Heart right ventricle (tissue), 16 donors: ENCODE measurements at regions of chr10 and their contacts with region 1.

Region 1: DNA sequence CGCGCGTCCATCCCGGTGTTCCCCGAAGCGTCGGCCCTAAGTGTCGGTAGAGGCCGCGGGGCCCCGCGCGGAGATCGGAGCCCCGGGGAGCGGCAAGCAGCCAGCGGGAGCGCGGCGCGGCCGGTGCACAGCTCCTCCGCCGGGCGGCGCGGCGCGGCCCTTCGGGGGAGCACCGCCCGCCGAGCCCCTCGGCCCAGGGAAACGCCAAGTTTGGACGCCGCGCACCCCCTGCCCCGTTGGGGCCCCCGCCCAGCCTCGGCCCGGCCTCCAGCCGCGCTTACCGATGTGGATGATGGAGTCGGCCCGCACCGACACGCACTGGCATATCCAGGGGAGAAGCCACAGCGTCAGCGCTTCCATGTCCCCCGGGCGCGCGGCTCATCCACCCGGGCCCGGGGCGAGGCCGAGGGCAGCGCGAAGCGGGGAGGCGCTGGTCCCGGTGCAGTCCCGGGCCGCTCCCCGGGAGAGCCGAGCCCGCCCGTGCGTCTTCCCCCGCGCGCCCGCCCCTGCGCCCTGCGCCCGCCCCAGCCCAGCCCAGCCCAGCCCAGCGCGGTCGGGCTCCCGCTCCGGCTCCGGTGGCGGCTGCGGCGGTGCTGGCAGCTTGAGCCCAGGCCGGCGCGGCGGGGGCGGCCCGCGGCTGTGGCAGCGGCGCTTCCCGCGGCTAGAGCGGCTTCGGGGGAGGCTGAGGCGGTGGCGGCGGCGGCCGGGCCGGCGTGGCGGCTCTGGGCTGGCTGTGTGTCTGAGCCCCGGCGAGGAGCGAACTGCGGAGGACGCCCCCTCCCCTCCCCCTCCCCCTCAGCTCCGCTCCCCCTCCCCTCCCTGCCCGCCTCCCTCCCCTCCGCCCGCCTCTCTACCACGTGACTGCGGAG is at the start of gene GRID1:
- DNase-seq: peak in 1 of 2 donors; percentile 42
- ATAC-seq: peak in 6 of 8 donors; percentile 30 to 64 (median 43)
- H3K4me3 ChIP-seq: peak within 1 kb of the TSS; percentile 23 to 65 (median 54)
- H3K27ac ChIP-seq: no peak within 1 kb of the TSS
- H3K4me1 ChIP-seq: peaks cover 0 to 43% (median 24%) of the 10 kb centered on the region in 9 donors
- H3K27me3 ChIP-seq: peaks cover 7 to 89% (median 72%) of the 10 kb centered on the region in 7 donors
- CTCF ChIP-seq: peak in 3 of 9 donors; percentile 3 to 33 (median 23)
- total RNA-seq, gene GRID1: 0.77 to 3.4 (median 1.9) TPM

Region 2: GRCh38 chr10:85548034-85548433 is 818.2 kb before region 1 on chr10:
- intact Hi-C with region 1: loop called in 3 of 10 experiments (anchors 10 kb)
- DNase-seq: peak in 1 of 2 donors; percentile 16
- ATAC-seq: peak in 1 of 8 donors; percentile 70
- H3K4me3 ChIP-seq: no peak overlapping the region
- H3K27ac ChIP-seq: no peak overlapping the region
- H3K4me1 ChIP-seq: no peaks in the 10 kb centered on the region
- H3K27me3 ChIP-seq: peaks cover 0 to 4% (median 0%) of the 10 kb centered on the region in 7 donors
- CTCF ChIP-seq: peak in 7 of 9 donors; percentile 5 to 59 (median 43)

Region 3: GRCh38 chr10:85791818-85792532 is 574.3 kb before region 1 on chr10:
- intact Hi-C with region 1: loop called in 6 of 10 experiments (anchors 5 to 10 kb)
- DNase-seq: no peak
- ATAC-seq: peak in 3 of 8 donors; percentile 16 to 62 (median 45)
- H3K4me3 ChIP-seq: no peak overlapping the region
- H3K27ac ChIP-seq: no peak overlapping the region
- H3K4me1 ChIP-seq: peaks cover 0 to 16% (median 5%) of the 10 kb centered on the region in 9 donors
- H3K27me3 ChIP-seq: no peaks in the 10 kb centered on the region
- CTCF ChIP-seq: peak in 6 of 9 donors; percentile 27 to 54 (median 40)

Region 4: DNA sequence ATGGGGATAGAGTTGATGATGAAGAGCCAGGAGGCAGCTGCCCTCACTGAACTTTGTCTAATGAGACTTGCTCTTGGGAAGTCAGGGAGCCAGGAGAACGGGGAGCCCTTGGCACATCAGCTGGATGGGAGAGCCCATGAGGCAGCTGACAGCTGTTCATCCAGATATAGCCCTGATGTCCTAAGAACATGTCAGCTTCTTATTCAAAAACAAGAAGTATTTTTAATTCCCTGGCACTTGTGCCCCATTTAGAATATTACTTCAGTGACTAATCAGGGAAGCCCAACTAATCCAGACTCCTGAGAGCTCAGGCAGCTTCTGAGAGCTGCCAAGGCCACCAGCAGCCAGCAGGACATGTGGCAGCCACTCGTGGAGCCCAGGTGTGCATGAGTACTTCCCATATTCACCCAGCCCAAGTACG is 363.1 kb before region 1 on chr10:
- intact Hi-C with region 1: loop called in 8 of 10 experiments (anchors 5 to 10 kb)
- DNase-seq: peak in 1 of 2 donors; percentile 31
- ATAC-seq: peak; percentile 38 to 98 (median 94)
- H3K4me3 ChIP-seq: no peak overlapping the region
- H3K27ac ChIP-seq: peak overlapping the region in 1 of 10 donors; percentile 18
- H3K4me1 ChIP-seq: peaks cover 0 to 9% (median 0%) of the 10 kb centered on the region in 9 donors
- H3K27me3 ChIP-seq: peaks cover 0 to 4% (median 0%) of the 10 kb centered on the region in 7 donors
- CTCF ChIP-seq: no peak

Region 5: GRCh38 chr10:86079088-86079487 is 287.2 kb before region 1 on chr10:
- intact Hi-C with region 1: no loop called
- DNase-seq: no peak
- ATAC-seq: peak in 5 of 8 donors; percentile 47 to 84 (median 62)
- H3K4me3 ChIP-seq: no peak overlapping the region
- H3K27ac ChIP-seq: no peak overlapping the region
- H3K4me1 ChIP-seq: peaks cover 0 to 11% (median 0%) of the 10 kb centered on the region in 9 donors
- H3K27me3 ChIP-seq: peaks cover 0 to 9% (median 0%) of the 10 kb centered on the region in 7 donors
- CTCF ChIP-seq: no peak

Region 6: DNA sequence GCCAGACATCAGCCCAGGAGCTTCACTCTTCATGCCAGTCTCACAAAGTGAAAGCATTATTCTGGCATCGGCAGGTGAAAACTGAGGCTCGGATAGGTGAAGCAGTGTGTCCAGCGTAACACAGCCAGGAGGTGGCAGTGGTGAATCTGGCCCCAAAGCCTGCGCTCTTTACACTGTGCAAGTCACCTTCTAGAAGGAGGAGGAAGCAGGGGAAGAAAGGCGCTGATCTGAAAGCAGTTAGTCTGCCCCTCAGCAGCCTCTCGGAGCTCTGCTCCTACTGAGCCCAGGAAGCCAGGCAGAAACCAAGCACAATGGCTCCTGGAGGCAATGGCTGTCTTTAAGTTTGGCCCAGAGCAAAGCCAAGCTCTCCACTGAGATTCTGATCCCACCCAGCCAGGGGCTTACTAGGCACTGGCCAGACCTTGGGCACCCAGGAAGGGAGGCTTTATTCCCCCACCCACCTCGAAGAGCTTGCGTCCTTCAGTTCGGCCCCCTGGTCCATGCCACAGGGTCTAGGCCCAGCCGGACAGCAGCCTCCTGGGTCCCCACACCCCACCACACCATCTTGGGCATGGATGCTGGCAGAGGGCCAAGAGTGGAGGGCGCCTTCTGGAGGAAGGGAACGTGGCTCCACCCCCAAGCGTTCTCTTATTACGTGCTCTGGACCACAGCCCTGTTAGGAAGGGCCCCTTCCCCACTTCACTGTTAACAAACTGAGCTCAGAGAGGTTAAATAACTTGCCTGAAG is 104.2 kb before region 1 on chr10:
- intact Hi-C with region 1: loop called in 1 of 10 experiments (anchors 5 kb)
- DNase-seq: no peak
- ATAC-seq: peak in 3 of 8 donors; percentile 47 to 69 (median 49)
- H3K4me3 ChIP-seq: no peak overlapping the region
- H3K27ac ChIP-seq: no peak overlapping the region
- H3K4me1 ChIP-seq: peaks cover 0 to 8% (median 0%) of the 10 kb centered on the region in 9 donors
- H3K27me3 ChIP-seq: peaks cover 0 to 33% (median 29%) of the 10 kb centered on the region in 7 donors
- CTCF ChIP-seq: peak in 2 of 9 donors; percentile 19 to 37

Region 7: GRCh38 chr10:86349474-86349873 is 16.8 kb before region 1 on chr10:
- intact Hi-C with region 1: no loop called
- DNase-seq: no peak
- ATAC-seq: no peak
- H3K4me3 ChIP-seq: no peak overlapping the region
- H3K27ac ChIP-seq: no peak overlapping the region
- H3K4me1 ChIP-seq: peaks cover 0 to 25% (median 0%) of the 10 kb centered on the region in 9 donors
- H3K27me3 ChIP-seq: peaks cover 0 to 7% (median 0%) of the 10 kb centered on the region in 7 donors
- CTCF ChIP-seq: peak in 3 of 9 donors; percentile 20 to 22 (median 22)

Region 8: DNA sequence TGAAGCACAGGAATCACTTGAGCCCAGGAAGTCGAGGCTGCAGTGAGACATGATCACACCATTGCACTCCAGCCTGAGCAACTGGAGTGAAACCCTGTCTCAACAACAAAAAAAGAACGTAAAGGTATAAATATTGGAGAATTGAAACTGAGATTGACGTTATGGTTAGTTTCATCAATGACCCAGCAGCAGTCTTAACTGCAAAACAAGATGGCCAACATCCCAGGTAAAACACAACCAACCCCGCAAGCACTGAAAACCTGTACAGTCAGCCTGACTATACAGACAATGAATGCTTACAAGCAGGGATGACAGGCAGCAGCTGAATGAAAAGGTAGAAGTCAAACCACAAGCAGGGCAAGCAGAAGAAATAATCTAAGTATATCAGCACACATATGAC is 120.6 kb after region 1 on chr10:
- intact Hi-C with region 1: no loop called
- DNase-seq: no peak
- ATAC-seq: no peak
- H3K4me3 ChIP-seq: no peak overlapping the region
- H3K27ac ChIP-seq: no peak overlapping the region
- H3K4me1 ChIP-seq: peaks cover 0 to 10% (median 0%) of the 10 kb centered on the region in 9 donors
- H3K27me3 ChIP-seq: no peaks in the 10 kb centered on the region
- CTCF ChIP-seq: no peak